Endothelial cell of umbilical vein (primary cell): ENCODE measurements at regions of chr15 and their contacts with region 1.

Region 1: DNA sequence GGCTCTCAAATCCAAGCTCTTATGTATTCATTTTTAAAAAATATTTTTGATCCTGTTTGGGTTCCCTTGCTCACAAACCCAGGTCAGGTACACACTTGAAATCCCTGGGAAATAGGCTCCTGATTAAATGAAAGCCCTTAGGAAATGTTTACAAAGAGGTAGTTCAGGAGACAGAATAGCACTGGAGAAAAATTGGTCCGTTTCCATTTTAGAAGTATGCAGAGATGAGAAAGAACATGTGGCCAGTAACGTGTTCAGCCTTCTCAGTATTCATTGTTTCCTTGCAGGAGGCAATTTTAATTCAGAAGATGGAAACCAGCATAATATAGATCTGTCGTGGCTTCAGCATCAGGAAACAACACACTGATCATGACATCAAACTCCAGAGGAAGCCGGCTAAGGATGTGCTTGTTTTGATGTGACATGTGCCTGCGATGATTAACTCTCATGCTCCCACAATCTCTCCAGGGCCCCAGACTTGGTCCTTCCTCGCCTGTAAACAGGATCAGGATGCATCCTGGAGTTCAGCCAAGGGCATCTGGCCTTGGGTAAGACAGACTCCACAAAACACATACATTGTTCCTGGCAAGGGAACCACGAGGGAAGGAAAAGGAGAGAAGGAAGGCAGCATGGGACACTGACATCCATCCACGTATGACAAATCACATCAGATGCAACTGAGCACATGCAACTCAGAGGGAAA is 350.5 kb upstream of the THBS1 start:
- DNase-seq: peak; percentile 100
- H3K4me3 ChIP-seq: no peak overlapping the region
- H3K27ac ChIP-seq: peak overlapping the region; percentile 93
- H3K4me1 ChIP-seq: peaks cover 49% of the 10 kb centered on the region
- H3K27me3 ChIP-seq: no peaks in the 10 kb centered on the region
- CTCF ChIP-seq: no peak
- POLR2A ChIP-seq: no peak

Region 2: GRCh38 chr15:39132954-39133600 is 97.3 kb before region 1 on chr15:
- CTCF ChIA-PET with region 1: no interaction called
- POLR2A ChIA-PET with region 1: no interaction called
- dilution Hi-C with region 1: no loop called
- intact Hi-C with region 1: loop called (anchors 1 kb)
- DNase-seq: peak; percentile 64
- H3K4me3 ChIP-seq: no peak overlapping the region
- H3K27ac ChIP-seq: peak overlapping the region; percentile 48
- H3K4me1 ChIP-seq: peaks cover 53% of the 10 kb centered on the region
- H3K27me3 ChIP-seq: no peaks in the 10 kb centered on the region
- CTCF ChIP-seq: no peak
- POLR2A ChIP-seq: no peak

Region 3: DNA sequence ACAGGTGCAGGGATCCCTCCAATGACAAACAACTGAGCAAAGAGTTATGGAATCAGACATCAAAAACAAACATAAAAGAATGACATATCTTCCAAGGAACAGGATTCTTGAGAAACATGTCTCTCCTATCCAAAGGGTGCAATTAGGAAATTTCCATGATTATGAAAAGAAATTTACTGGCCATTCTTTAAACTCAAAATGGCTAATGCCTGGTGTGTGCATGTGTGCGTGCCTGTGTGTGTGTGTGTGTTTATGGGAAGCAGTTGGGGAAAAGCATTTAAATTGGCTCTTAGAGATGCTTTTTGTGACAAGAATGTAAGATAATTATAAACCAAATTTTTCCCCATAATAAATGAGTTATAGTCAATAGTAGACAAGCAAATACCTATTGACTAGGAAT is 30.0 kb after region 1 on chr15:
- CTCF ChIA-PET with region 1: no interaction called
- POLR2A ChIA-PET with region 1: no interaction called
- dilution Hi-C with region 1: no loop called
- intact Hi-C with region 1: loop called (anchors 1 kb)
- DNase-seq: no peak
- H3K4me3 ChIP-seq: no peak overlapping the region
- H3K27ac ChIP-seq: peak overlapping the region; percentile 95
- H3K4me1 ChIP-seq: peaks cover 32% of the 10 kb centered on the region
- H3K27me3 ChIP-seq: no peaks in the 10 kb centered on the region
- CTCF ChIP-seq: no peak
- POLR2A ChIP-seq: no peak

Region 4: GRCh38 chr15:39472621-39473297 is 242.4 kb after region 1 on chr15:
- CTCF ChIA-PET with region 1: no interaction called
- POLR2A ChIA-PET with region 1: no interaction called
- dilution Hi-C with region 1: no loop called
- intact Hi-C with region 1: no loop called
- DNase-seq: no peak
- H3K4me3 ChIP-seq: no peak overlapping the region
- H3K27ac ChIP-seq: no peak overlapping the region
- H3K4me1 ChIP-seq: peaks cover 26% of the 10 kb centered on the region
- H3K27me3 ChIP-seq: no peaks in the 10 kb centered on the region
- CTCF ChIP-seq: no peak
- POLR2A ChIP-seq: no peak